MCF 10A (cell line): ENCODE measurements at regions of chr5 and their contacts with region 1.

Region 1: DNA sequence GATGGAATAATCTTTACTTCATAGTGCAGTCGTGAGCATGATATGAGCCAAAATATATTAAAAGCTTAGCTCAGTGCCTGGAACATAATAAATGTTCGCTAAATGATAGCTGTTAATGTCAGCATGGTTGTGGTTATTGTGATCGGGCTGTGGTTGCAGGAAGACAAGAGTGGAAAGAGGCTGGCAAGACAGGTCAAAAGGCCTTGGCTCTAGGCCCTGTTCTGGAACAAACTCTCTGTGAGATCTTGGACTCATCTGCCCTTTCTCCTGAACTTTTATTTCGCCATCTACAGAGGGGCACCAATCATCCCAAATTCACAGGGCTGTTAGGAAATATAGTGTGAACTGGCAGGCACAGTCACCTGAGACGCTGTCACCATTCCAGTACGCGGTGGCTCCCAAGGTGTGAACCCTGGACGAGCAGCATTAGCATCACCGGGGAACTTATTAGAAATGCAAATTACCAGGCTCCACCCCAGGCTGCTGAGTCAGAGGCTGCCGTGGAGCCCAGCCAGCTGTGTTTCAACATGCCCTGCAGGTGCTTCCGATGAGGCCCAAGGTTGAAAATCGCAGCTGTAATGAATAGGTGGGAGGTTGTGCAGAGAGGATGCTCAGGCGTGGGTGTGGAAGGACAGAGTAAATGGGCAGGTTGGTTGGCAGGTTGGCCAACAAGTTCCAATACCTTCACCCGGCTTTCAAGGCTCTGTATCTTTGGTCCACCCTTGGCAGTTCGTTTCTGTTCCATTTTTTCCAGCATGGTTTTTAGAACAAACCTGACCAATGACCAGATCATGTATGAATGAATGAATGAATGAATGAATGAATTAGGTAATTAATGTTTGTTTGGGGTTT is 50.2 kb upstream of the SAP30L start:
- DNase-seq: peak; percentile 97
- H3K4me3 Mint-ChIP-seq: peak overlapping the region; percentile 37
- H3K27ac Mint-ChIP-seq: peak overlapping the region; percentile 6
- H3K4me1 Mint-ChIP-seq: peaks cover 34% of the 10 kb centered on the region
- H3K27me3 Mint-ChIP-seq: no peaks in the 10 kb centered on the region
- CTCF ChIP-seq: no peak

Region 2: GRCh38 chr5:154196955-154197652 is 198.5 kb before region 1 on chr5:
- CTCF ChIA-PET with region 1: interaction called, 15 read pairs
- POLR2A ChIA-PET with region 1: interaction called, 18 read pairs
- intact Hi-C with region 1: loop called (anchors 1 kb)
- DNase-seq: peak; percentile 35
- H3K4me3 Mint-ChIP-seq: no peak overlapping the region
- H3K27ac Mint-ChIP-seq: no peak overlapping the region
- H3K4me1 Mint-ChIP-seq: peaks cover 53% of the 10 kb centered on the region
- H3K27me3 Mint-ChIP-seq: no peaks in the 10 kb centered on the region
- CTCF ChIP-seq: peak; percentile 20

Region 3: DNA sequence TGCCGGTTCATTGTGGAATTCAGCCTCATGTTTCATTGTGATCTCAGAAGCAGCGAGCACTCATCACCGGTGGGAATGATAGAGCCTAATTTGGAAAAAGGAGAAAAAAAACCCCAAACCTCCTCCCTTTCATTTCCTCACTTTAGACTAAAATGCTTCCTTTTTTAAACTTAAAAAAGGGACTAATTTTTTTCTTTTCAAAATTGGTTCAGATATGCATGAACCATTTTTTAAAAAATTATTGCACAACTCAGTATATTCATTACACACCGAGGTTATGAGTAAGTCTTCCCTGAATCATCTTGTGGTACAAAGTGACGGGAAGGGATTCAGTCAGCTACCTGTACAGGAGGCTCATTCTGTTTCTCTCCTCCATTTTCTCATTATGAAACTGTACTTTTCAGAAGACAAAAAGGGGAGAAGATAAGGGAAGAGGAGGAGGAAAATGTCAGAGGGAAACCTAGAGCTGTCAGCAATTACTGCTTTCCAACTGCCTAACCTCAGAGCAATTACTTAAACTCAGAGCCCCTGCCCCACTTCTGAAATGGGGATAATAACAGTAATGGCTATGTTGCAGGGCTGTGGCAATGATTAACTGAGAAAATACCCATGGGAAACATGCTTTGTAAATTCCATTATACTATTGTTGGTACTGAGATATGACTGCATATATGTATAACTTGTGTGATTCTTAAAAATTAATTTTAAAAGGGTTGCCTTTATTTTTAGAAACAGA is 181.1 kb before region 1 on chr5:
- CTCF ChIA-PET with region 1: no interaction called
- POLR2A ChIA-PET with region 1: interaction called, 7 read pairs
- intact Hi-C with region 1: loop called (anchors 1 kb)
- DNase-seq: peak; percentile 92
- H3K4me3 Mint-ChIP-seq: peak overlapping the region; percentile 63
- H3K27ac Mint-ChIP-seq: peak overlapping the region; percentile 85
- H3K4me1 Mint-ChIP-seq: peaks cover 27% of the 10 kb centered on the region
- H3K27me3 Mint-ChIP-seq: no peaks in the 10 kb centered on the region
- CTCF ChIP-seq: no peak

Region 4: DNA sequence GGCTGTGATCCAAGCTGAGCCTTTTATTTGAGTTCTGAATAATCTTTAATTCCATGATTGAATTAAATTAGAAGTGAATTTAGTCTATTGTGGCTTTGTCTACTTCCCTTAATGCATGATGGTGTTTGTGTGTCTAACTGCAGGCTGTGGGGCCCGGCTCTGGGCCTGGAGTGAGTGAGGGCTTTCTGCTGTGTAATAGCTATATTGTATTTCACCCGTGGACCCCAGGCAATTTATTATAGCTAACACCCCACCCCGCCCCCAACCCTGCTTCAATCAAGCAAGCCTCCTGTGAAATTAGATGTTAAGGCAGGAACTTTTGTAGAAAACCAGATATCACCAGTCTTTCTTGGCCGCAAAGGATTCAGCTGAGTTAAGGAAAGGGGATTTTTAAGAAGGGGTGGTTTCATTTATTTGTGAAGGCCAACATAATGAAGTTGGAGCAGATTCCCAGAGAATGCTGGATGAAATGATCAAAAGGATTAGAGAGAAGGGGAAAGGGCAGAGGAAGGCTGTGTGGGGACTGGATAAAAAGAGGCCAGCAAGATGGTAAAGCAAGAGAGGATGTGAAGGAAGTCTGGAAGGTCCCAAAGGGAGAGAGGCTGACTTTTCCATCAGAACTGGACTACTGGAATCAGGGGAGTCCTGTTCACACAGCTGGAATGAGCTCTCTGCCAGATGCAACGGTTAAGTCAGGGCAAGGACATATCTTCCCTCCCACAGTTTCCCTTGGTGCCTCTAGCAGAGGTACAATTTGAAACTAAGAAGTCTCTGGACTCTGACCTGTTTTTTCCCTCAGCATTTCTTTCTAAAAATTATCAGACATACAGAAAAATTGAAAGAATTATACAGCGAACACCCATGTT is 75.2 kb before region 1 on chr5:
- CTCF ChIA-PET with region 1: no interaction called
- POLR2A ChIA-PET with region 1: no interaction called
- intact Hi-C with region 1: no loop called
- DNase-seq: no peak
- H3K4me3 Mint-ChIP-seq: no peak overlapping the region
- H3K27ac Mint-ChIP-seq: no peak overlapping the region
- H3K4me1 Mint-ChIP-seq: peaks cover 5% of the 10 kb centered on the region
- H3K27me3 Mint-ChIP-seq: no peaks in the 10 kb centered on the region
- CTCF ChIP-seq: no peak

Region 5: GRCh38 chr5:154356020-154356655 is 39.5 kb before region 1 on chr5:
- CTCF ChIA-PET with region 1: interaction called, 3 read pairs
- POLR2A ChIA-PET with region 1: interaction called, 3 read pairs
- intact Hi-C with region 1: loop called (anchors 1 kb)
- DNase-seq: peak; percentile 68
- H3K4me3 Mint-ChIP-seq: no peak overlapping the region
- H3K27ac Mint-ChIP-seq: peak overlapping the region; percentile 24
- H3K4me1 Mint-ChIP-seq: peaks cover 49% of the 10 kb centered on the region
- H3K27me3 Mint-ChIP-seq: no peaks in the 10 kb centered on the region
- CTCF ChIP-seq: no peak

Region 6: GRCh38 chr5:154368041-154368800 is 27.4 kb before region 1 on chr5:
- CTCF ChIA-PET with region 1: interaction called, 10 read pairs
- POLR2A ChIA-PET with region 1: interaction called, 22 read pairs
- intact Hi-C with region 1: loop called (anchors 1 kb)
- DNase-seq: peak; percentile 98
- H3K4me3 Mint-ChIP-seq: peak overlapping the region; percentile 42
- H3K27ac Mint-ChIP-seq: peak overlapping the region; percentile 84
- H3K4me1 Mint-ChIP-seq: peaks cover 63% of the 10 kb centered on the region
- H3K27me3 Mint-ChIP-seq: no peaks in the 10 kb centered on the region
- CTCF ChIP-seq: no peak

Region 7: DNA sequence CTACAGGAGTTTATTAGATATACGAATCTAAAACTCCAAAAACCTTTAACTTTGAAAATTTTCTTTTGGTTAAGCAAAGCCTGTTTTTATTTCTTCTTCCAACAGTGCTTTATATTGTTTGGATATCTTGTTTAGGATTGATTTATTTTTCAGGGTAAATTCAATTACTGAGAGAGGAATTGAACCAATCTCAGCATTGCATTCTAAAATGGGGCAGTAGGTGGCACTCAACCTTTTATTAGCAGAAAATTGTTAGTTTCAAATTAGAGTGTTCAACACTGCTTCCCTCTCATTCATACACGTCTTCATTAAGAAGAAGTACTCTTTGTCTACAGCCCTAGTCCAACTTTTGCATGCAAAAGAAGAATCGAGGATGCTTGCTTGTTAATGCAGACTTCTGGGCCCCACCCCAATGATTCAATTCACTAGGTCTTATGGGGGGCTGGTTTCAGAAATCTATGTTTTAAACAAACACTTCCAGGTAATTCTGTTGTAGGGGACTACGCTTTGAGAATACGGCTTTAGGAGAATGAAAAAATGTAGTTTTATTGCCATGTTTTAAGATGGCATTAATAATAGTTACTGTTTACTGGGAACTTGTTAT is 571.9 kb after region 1 on chr5:
- CTCF ChIA-PET with region 1: no interaction called
- POLR2A ChIA-PET with region 1: no interaction called
- intact Hi-C with region 1: no loop called
- DNase-seq: peak; percentile 38
- H3K4me3 Mint-ChIP-seq: no peak overlapping the region
- H3K27ac Mint-ChIP-seq: no peak overlapping the region
- H3K4me1 Mint-ChIP-seq: no peaks in the 10 kb centered on the region
- H3K27me3 Mint-ChIP-seq: no peaks in the 10 kb centered on the region
- CTCF ChIP-seq: peak; percentile 55